GM12878 (cell line): ENCODE measurements at regions of chr6 and their contacts with region 1.

Region 1: GRCh38 chr6:27772261-27773001 is 139.8 kb downstream of the OR2B2 start:
- DNase-seq: no peak
- ATAC-seq: peak; percentile 86
- H3K4me3 ChIP-seq: no peak overlapping the region
- H3K27ac ChIP-seq: no peak overlapping the region
- H3K4me1 ChIP-seq: peaks cover 18% of the 10 kb centered on the region
- H3K27me3 ChIP-seq: no peaks in the 10 kb centered on the region
- CTCF ChIP-seq: peak; percentile 86 to 95 (median 94)
- EP300 ChIP-seq: no peak
- POLR2A ChIP-seq: no peak
- RAD21 ChIP-seq: peak; percentile 69

Region 2: GRCh38 chr6:27667016-27667656 is 105.3 kb before region 1 on chr6:
- CTCF ChIA-PET with region 1: no interaction called
- POLR2A ChIA-PET with region 1: no interaction called
- RAD21 ChIA-PET with region 1: no interaction called
- SMC1A ChIA-PET with region 1: no interaction called
- in situ Hi-C with region 1: no loop called
- intact Hi-C with region 1: no loop called
- DNase-seq: no peak
- ATAC-seq: no peak
- H3K4me3 ChIP-seq: peak overlapping the region; percentile 67
- H3K27ac ChIP-seq: no peak overlapping the region; the same call in 1 of the 2 replicates
- H3K4me1 ChIP-seq: peaks cover 11% of the 10 kb centered on the region
- H3K27me3 ChIP-seq: no peaks in the 10 kb centered on the region
- CTCF ChIP-seq: no peak
- EP300 ChIP-seq: no peak
- POLR2A ChIP-seq: no peak
- RAD21 ChIP-seq: no peak

Region 3: GRCh38 chr6:27761391-27761790 is 11.0 kb before region 1 on chr6:
- CTCF ChIA-PET with region 1: interaction called, 193 read pairs
- POLR2A ChIA-PET with region 1: interaction called, 29 read pairs
- RAD21 ChIA-PET with region 1: interaction called, 43 read pairs
- SMC1A ChIA-PET with region 1: interaction called, 93 read pairs
- in situ Hi-C with region 1: no loop called
- intact Hi-C with region 1: no loop called
- DNase-seq: no peak
- ATAC-seq: peak; percentile 43
- H3K4me3 ChIP-seq: no peak overlapping the region
- H3K27ac ChIP-seq: peak overlapping the region; percentile 66
- H3K4me1 ChIP-seq: peaks cover 26% of the 10 kb centered on the region
- H3K27me3 ChIP-seq: no peaks in the 10 kb centered on the region
- CTCF ChIP-seq: no peak
- EP300 ChIP-seq: no peak
- POLR2A ChIP-seq: no peak
- RAD21 ChIP-seq: no peak

Region 4: GRCh38 chr6:27785294-27785693 is 12.9 kb after region 1 on chr6:
- CTCF ChIA-PET with region 1: interaction called, 22 read pairs
- POLR2A ChIA-PET with region 1: interaction called, 5 read pairs
- RAD21 ChIA-PET with region 1: interaction called, 5 read pairs
- SMC1A ChIA-PET with region 1: interaction called, 12 read pairs
- in situ Hi-C with region 1: no loop called
- intact Hi-C with region 1: no loop called
- DNase-seq: no peak
- ATAC-seq: no peak
- H3K4me3 ChIP-seq: no peak overlapping the region
- H3K27ac ChIP-seq: no peak overlapping the region
- H3K4me1 ChIP-seq: no peaks in the 10 kb centered on the region
- H3K27me3 ChIP-seq: no peaks in the 10 kb centered on the region
- CTCF ChIP-seq: no peak
- EP300 ChIP-seq: no peak
- POLR2A ChIP-seq: no peak
- RAD21 ChIP-seq: no peak

Region 5: DNA sequence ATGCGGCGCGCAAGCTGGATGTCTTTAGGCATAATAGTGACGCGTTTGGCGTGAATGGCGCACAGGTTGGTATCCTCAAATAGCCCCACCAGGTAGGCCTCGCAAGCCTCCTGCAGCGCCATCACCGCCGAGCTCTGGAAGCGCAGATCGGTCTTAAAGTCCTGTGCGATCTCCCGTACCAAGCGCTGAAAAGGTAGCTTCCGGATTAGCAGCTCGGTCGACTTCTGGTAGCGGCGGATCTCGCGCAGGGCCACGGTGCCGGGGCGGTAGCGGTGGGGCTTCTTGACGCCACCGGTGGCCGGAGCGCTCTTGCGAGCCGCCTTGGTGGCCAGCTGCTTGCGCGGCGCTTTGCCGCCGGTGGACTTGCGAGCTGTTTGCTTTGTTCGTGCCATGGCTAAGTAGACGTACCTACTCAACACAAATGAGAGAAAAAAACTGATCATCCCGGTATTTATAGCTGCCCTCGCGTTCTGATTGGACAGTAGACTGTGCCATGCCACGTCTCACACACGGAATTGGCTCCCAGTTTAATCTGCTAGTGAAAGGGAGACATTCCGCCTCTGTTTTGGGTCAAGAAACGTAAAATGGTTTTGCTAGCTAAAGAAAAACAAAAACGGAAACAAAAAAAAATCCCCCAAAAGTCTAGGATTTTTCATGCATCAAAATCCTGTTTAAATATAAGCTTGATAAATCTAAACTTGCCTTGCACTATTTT is 99.7 kb after region 1 on chr6:
- CTCF ChIA-PET with region 1: no interaction called
- POLR2A ChIA-PET with region 1: no interaction called
- RAD21 ChIA-PET with region 1: no interaction called
- SMC1A ChIA-PET with region 1: no interaction called
- in situ Hi-C with region 1: no loop called
- intact Hi-C with region 1: no loop called
- DNase-seq: peak; percentile 99
- ATAC-seq: peak; percentile 73
- H3K4me3 ChIP-seq: peak overlapping the region; percentile 69
- H3K27ac ChIP-seq: peak overlapping the region; percentile 97
- H3K4me1 ChIP-seq: peaks cover 20% of the 10 kb centered on the region
- H3K27me3 ChIP-seq: no peaks in the 10 kb centered on the region
- CTCF ChIP-seq: peak; percentile 29 to 44 (median 43); a peak in 5 of 6 replicates
- EP300 ChIP-seq: no peak
- POLR2A ChIP-seq: peak; percentile 97
- RAD21 ChIP-seq: no peak